ENCODE measurements at regions of chr12 and their contacts with region 1.

Region 1: DNA sequence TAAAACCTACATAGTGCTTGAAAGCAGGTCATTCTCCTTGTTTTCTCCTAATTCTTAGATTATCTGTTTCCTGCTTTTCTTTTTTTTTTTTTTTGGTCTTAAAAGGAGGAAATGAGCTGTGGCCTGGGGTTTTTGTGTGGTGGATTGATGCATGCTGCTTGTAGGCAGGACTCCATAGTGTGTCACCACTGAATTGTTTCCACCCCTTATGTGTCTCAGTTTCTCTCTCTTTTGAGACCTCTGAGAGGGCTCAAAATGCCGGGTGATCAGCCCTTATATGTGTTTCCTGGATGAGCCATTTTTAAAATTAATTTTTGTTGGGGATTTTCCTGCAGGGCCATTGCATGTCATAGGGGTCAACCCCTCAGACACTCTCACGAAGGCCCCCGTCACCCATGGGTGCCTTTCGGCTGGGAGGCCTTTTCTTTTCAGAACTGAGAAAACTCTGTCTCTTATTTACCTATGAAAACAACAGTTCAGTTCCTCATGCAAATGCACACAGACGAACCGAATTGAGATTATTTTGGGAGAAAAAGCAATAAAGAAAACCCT is 32.0 kb upstream of the LRRK2 start:
- DNase-seq: peak; percentile 86
- ATAC-seq: peak; percentile 99
- H3K4me3 ChIP-seq: peak overlapping the region; percentile 11; the same call in 1 of the 2 replicates
- H3K27ac ChIP-seq: peak overlapping the region; percentile 79
- H3K4me1 ChIP-seq: peaks cover 7% of the 10 kb centered on the region; the same call in 1 of the 2 replicates
- H3K27me3 ChIP-seq: no peaks in the 10 kb centered on the region
- CTCF ChIP-seq: no peak
- EP300 ChIP-seq: peak; percentile 13 to 61; a peak in 2 of 4 replicates
- POLR2A ChIP-seq: no peak
- RAD21 ChIP-seq: no peak

Region 2: GRCh38 chr12:40158592-40159111 is 34.1 kb before region 1 on chr12:
- CTCF ChIA-PET with region 1: interaction called, 6 read pairs
- POLR2A ChIA-PET with region 1: interaction called, 3 read pairs
- RAD21 ChIA-PET with region 1: interaction called, 19 read pairs
- SMC1A ChIA-PET with region 1: interaction called, 16 read pairs
- in situ Hi-C with region 1: no loop called
- intact Hi-C with region 1: no loop called
- DNase-seq: no peak
- ATAC-seq: peak; percentile 84
- H3K4me3 ChIP-seq: no peak overlapping the region
- H3K27ac ChIP-seq: peak overlapping the region; percentile 53; the same call in 1 of the 2 replicates
- H3K4me1 ChIP-seq: peaks cover 10% of the 10 kb centered on the region
- H3K27me3 ChIP-seq: no peaks in the 10 kb centered on the region
- CTCF ChIP-seq: no peak
- EP300 ChIP-seq: no peak
- POLR2A ChIP-seq: no peak
- RAD21 ChIP-seq: no peak

Region 3: DNA sequence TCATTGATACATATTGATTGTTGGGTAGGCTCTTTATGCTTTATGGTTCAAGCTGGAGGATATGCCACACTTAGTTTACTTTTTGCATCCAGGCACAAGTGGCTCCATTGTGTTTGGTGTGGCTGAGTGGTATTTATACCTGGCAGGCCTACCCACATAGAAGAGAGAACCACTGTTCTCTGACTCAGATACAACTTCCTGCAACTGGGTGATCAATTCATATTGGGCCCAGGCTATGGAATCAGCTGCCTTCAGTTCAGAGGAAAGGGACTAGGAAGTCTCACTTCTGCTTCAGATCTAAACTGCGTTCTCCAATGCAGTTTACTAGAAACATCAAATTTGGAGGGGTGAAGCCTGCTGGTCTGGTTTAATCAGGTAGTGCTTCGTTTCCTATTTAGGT is 17.7 kb before region 1 on chr12:
- CTCF ChIA-PET with region 1: interaction called, 6 read pairs
- POLR2A ChIA-PET with region 1: interaction called, 14 read pairs
- RAD21 ChIA-PET with region 1: interaction called, 11 read pairs
- SMC1A ChIA-PET with region 1: interaction called, 21 read pairs
- in situ Hi-C with region 1: no loop called
- intact Hi-C with region 1: no loop called
- DNase-seq: no peak
- ATAC-seq: no peak; the same call in 2 of the 3 replicates
- H3K4me3 ChIP-seq: no peak overlapping the region
- H3K27ac ChIP-seq: no peak overlapping the region
- H3K4me1 ChIP-seq: no peaks in the 10 kb centered on the region
- H3K27me3 ChIP-seq: peaks cover 0 to 2% of the 10 kb centered on the region in 2 experiments; a peak in 2 of 4 replicates
- CTCF ChIP-seq: no peak
- EP300 ChIP-seq: no peak
- POLR2A ChIP-seq: no peak
- RAD21 ChIP-seq: no peak

Region 4: DNA sequence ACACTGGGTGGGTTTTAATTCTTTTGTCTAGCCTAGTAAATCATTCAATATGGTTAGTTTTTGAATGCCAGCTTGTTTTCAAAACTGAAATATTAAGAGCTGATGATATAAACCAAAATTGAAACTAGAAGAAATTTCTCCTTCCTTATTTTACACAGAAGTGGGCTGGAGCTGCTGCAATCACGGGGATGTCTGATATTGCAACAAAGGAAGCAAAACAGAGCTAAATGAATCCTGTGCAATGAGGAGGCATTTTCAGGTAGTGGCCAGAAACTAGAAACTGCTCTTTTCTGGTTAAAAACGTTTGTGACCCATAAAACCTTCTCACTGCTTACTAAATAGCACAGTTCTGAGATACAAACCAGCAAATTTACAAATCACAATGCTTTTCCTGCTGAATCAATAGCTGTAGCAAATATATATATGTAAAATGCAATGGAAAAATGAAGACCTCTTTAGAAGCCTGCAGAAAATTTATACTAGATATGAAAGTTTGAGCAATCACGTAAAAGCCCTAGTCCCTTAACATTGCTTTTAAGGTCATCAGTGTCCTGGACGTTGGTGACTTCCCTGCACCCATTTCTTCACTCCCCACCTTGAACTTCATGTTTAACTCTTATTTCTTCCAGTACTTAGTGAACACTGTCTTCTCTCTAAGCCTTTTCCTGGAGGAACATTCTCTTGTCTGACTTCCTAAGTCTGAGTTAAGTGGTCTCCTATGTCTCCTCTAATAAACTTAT is 16.1 kb after region 1 on chr12:
- CTCF ChIA-PET with region 1: interaction called, 7 read pairs
- POLR2A ChIA-PET with region 1: interaction called, 10 read pairs
- RAD21 ChIA-PET with region 1: interaction called, 25 read pairs
- SMC1A ChIA-PET with region 1: interaction called, 34 read pairs
- in situ Hi-C with region 1: no loop called
- intact Hi-C with region 1: no loop called
- DNase-seq: no peak
- ATAC-seq: peak; percentile 94
- H3K4me3 ChIP-seq: no peak overlapping the region
- H3K27ac ChIP-seq: no peak overlapping the region
- H3K4me1 ChIP-seq: peaks cover 8% of the 10 kb centered on the region
- H3K27me3 ChIP-seq: no peaks in the 10 kb centered on the region
- CTCF ChIP-seq: no peak
- EP300 ChIP-seq: no peak
- POLR2A ChIP-seq: no peak
- RAD21 ChIP-seq: no peak

Region 5: GRCh38 chr12:40232602-40233001 is 39.8 kb after region 1 on chr12:
- CTCF ChIA-PET with region 1: interaction called, 5 read pairs
- POLR2A ChIA-PET with region 1: interaction called, 23 read pairs
- RAD21 ChIA-PET with region 1: interaction called, 29 read pairs
- SMC1A ChIA-PET with region 1: interaction called, 37 read pairs
- in situ Hi-C with region 1: no loop called
- intact Hi-C with region 1: no loop called
- DNase-seq: no peak
- ATAC-seq: peak; percentile 45
- H3K4me3 ChIP-seq: no peak overlapping the region
- H3K27ac ChIP-seq: no peak overlapping the region
- H3K4me1 ChIP-seq: peaks cover 13% of the 10 kb centered on the region; the same call in 1 of the 2 replicates
- H3K27me3 ChIP-seq: no peaks in the 10 kb centered on the region
- CTCF ChIP-seq: no peak
- EP300 ChIP-seq: no peak
- POLR2A ChIP-seq: no peak
- RAD21 ChIP-seq: no peak

Region 6: DNA sequence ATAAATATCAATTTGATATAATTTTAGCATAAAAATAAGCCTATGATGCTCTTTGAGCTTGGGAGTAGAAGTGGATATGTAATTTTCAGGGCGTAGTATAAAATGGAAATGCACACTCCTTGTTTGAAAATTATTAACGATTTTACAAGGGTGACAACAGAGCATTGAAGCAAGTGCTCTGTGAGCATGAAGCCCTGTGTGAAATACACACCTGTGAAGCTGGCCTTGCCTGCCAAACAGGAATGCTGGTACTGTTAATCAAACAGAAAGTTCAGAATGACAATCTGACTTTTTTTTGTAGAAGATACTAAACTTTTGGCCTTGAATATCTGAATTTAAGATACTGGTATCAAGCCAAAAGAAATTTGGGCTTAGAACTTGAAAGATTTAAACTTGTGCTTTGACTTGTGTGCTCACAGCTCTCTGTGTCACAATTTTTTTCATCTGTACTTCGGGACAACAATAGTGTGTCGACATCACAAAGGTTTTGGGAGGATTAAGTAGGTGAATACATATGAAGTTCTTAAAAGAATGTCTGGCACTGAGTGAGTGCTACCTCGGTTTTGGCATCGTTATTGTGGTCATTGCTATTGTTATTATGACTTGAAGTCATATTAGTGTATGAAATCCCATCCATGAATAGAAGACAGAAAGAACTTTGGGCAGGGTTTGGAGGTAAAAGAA is 79.3 kb after region 1 on chr12:
- CTCF ChIA-PET with region 1: no interaction called
- POLR2A ChIA-PET with region 1: no interaction called
- RAD21 ChIA-PET with region 1: no interaction called
- SMC1A ChIA-PET with region 1: interaction called, 13 read pairs
- in situ Hi-C with region 1: no loop called
- intact Hi-C with region 1: no loop called
- DNase-seq: no peak
- ATAC-seq: no peak
- H3K4me3 ChIP-seq: no peak overlapping the region
- H3K27ac ChIP-seq: no peak overlapping the region
- H3K4me1 ChIP-seq: no peaks in the 10 kb centered on the region
- H3K27me3 ChIP-seq: no peaks in the 10 kb centered on the region
- CTCF ChIP-seq: no peak
- EP300 ChIP-seq: no peak
- POLR2A ChIP-seq: no peak
- RAD21 ChIP-seq: no peak

Measured in GM12878 (cell line).